OCI-LY7 (cell line): ENCODE measurements at regions of chr15 and their contacts with region 1.

Region 1: GRCh38 chr15:43510200-43511011 is 7.0 kb upstream of the MAP1A start:
- DNase-seq: peak; percentile 100
- H3K4me3 ChIP-seq: peak overlapping the region; percentile 73
- H3K27ac ChIP-seq: peak overlapping the region; percentile 71
- H3K4me1 ChIP-seq: peaks cover 19% of the 10 kb centered on the region
- CTCF ChIP-seq: peak; percentile 43; the same call in 1 of the 2 replicates

Region 2: DNA sequence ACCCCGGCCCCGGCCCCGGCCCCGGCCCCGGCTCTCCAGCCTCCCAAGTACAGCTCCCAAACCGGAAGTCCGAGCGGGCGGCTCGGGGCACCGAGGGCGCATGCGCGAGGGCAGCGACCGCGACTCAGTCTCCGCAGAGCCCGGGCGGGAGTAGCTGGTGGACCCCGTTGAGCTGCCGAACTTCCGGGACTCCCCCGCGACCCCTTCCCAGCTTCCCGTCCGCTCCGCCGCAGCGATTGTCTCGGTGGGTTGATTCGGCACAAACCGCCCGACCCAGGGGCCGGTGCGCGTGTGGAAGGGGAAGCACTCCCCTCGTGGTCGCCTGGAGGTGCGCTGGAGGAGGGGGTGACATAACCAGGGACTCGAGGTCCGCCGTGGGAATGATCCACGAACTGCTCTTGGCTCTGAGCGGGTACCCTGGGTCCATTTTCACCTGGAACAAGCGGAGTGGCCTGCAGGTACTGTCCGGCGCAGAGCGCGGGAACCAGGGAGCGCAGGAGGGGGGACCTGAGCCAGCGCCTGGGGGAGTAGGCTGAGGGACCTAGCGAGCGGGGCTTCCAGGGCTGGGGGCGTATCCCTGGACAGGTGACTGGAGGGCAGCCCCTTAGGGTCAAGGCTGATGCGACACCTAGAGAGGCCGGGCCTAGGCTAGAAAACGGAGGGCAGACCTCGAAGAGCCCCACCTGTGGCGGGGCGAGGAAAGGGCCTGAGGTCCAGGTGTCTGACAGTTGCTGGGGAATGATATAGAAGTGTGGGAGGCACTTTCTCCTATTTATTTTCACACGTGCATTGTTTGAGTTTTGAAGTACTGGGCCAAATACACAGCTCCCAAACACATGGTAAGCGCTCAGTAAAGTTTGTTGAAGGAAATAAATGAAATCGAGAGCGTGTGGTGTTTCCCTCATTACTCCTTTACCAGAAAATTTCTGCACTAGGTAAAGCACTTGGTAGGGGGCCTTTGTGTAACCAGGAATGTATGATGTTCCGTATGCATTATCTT is 139.1 kb before region 1 on chr15 and contains the starts of genes TUBGCP4 and ZSCAN29:
- CTCF ChIA-PET with region 1: no interaction called
- POLR2A ChIA-PET with region 1: interaction called, 3 read pairs
- intact Hi-C with region 1: loop called (anchors 5 kb)
- DNase-seq: peak; percentile 95
- H3K4me3 ChIP-seq: peak within 1 kb of the TSS; percentile 79
- H3K27ac ChIP-seq: peak within 1 kb of the TSS; percentile 41
- H3K4me1 ChIP-seq: peaks cover 39% of the 10 kb centered on the region
- CTCF ChIP-seq: peak; percentile 82
- total RNA-seq, gene TUBGCP4: 31.4 and 36.0 TPM in 2 replicates
- total RNA-seq, gene ZSCAN29: 70.6 and 73.7 TPM in 2 replicates

Region 3: DNA sequence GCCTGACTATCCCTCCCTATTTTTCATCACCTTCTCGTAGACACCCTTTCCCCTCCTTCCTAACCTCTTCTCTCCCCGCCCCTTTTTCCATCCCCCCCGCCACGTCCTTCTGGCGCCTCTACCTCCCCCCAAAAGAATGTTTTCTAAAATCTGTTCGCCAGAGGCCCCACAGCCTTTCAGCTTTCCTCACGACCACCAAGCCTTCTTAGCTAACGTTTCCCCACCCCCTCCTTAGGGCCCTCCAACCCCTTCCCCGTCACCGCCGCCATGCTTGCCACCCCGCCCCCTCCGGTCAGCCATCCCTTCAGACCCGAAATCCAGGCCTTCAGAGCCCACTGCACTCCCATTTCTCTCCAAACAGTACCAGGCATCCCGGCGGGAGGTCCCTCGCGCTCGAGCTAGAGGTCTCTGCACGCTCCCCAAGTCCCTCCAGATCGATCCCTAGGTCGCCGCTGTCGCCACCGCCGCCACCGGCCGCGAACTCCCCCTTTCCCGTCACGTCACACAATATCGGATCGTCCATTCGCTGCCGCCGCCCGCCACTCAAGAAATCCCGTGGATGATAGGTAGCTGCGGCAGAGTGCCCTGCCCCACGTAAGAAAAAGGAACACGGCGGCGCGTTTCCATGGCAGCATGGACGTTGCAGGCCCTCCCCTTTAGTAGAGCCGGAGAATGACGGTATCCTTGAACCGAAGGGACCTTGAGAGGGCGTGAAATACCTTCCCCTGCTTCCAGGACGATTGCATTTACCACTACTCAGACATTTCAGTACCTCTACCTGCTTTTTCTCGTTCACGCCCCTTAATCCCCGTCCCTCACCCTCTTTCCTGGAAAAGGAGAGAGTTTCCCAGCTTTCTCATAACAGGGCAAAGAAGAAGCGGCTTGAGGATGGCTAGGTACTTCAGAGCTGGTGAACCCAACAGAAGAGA is 17.5 kb before region 1 on chr15 and contains the start of gene TP53BP1:
- CTCF ChIA-PET with region 1: interaction called, 7 read pairs
- POLR2A ChIA-PET with region 1: interaction called, 14 read pairs
- intact Hi-C with region 1: no loop called
- DNase-seq: peak; percentile 97
- H3K4me3 ChIP-seq: peak within 1 kb of the TSS; percentile 79
- H3K27ac ChIP-seq: peak within 1 kb of the TSS; percentile 8
- H3K4me1 ChIP-seq: peaks cover 14% of the 10 kb centered on the region
- CTCF ChIP-seq: no peak; the same call in 1 of the 2 replicates
- total RNA-seq, gene TP53BP1: 69.3 and 88.1 TPM in 2 replicates

Region 4: DNA sequence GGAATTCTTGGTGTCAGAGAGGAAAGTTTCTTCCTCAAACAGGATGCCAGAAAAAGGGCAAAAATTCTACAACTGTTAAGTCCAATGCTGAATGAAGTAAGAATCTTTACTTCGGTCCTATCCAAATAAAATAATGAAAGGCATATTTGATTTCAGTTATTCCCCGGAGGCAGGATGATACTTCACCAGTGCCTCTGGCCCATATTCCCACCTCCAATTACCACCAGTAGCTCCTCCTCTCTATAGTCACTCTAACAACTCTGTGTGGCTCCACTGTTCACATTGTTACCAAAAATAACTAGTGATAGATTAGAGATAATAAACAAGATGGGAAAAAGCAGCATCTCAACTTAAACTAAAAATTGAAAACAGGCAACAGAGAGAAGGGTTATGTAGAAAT is 27.7 kb after region 1 on chr15:
- CTCF ChIA-PET with region 1: no interaction called
- POLR2A ChIA-PET with region 1: interaction called, 3 read pairs
- intact Hi-C with region 1: loop called (anchors 2 kb)
- DNase-seq: no peak
- H3K4me3 ChIP-seq: no peak overlapping the region
- H3K27ac ChIP-seq: no peak overlapping the region
- H3K4me1 ChIP-seq: peaks cover 3% of the 10 kb centered on the region
- CTCF ChIP-seq: no peak

Region 5: DNA sequence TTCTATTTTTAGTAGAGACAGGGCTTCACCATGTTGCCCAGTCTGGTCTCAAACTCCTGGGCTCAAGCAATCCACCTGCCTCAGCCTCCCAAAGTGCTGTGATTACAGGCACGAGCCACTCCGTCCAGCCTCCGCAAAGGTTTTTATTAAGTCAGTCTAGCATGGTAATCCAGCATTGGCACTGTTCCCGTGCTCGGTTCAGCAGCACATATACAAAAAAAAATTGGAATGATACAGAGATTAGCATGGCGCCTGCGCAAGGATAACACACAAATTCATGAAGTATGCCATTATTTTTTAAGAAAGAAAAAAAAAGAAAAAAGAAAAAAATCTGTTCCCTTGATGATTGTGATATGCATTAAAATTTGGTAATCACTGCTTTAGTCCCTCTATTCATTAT is 191.8 kb after region 1 on chr15:
- CTCF ChIA-PET with region 1: no interaction called
- POLR2A ChIA-PET with region 1: no interaction called
- intact Hi-C with region 1: no loop called
- DNase-seq: no peak
- H3K4me3 ChIP-seq: no peak overlapping the region
- H3K27ac ChIP-seq: no peak overlapping the region
- H3K4me1 ChIP-seq: no peaks in the 10 kb centered on the region
- CTCF ChIP-seq: no peak